ENCODE measurements at regions of chr6 and their contacts with region 1.

Region 1: GRCh38 chr6:6766230-6766905 is 177.8 kb downstream of the LY86 start:
- DNase-seq: peak; percentile 50 to 75
- ATAC-seq: peak; percentile 94 to 97
- H3K4me3 ChIP-seq: peak overlapping the region in 1 of 4 donors; percentile 12
- H3K27ac ChIP-seq: peak overlapping the region; percentile 65 to 85 (median 73)
- H3K4me1 ChIP-seq: peaks cover 16 to 22% of the 10 kb centered on the region in 2 donors
- H3K27me3 ChIP-seq: no peaks in the 10 kb centered on the region
- CTCF ChIP-seq: no peak
- POLR2A ChIP-seq: no peak

Region 2: GRCh38 chr6:6712258-6712999 is 53.9 kb before region 1 on chr6:
- in situ Hi-C with region 1: no loop called
- intact Hi-C with region 1: no loop called
- DNase-seq: no peak
- ATAC-seq: peak; percentile 32 to 57
- H3K4me3 ChIP-seq: no peak overlapping the region
- H3K27ac ChIP-seq: peak overlapping the region in 2 of 4 donors; percentile 24 to 34
- H3K4me1 ChIP-seq: peaks cover 4 to 9% of the 10 kb centered on the region in 2 donors
- H3K27me3 ChIP-seq: no peaks in the 10 kb centered on the region
- CTCF ChIP-seq: no peak
- POLR2A ChIP-seq: no peak

Region 3: GRCh38 chr6:6811151-6812002 is 45.0 kb after region 1 on chr6:
- in situ Hi-C with region 1: no loop called
- intact Hi-C with region 1: loop called (anchors 5 kb)
- DNase-seq: no peak
- ATAC-seq: peak; percentile 47 to 64
- H3K4me3 ChIP-seq: peak overlapping the region; percentile 27 to 42 (median 38)
- H3K27ac ChIP-seq: peak overlapping the region in 3 of 4 donors; percentile 6 to 48 (median 39)
- H3K4me1 ChIP-seq: peaks cover 0 to 7% of the 10 kb centered on the region in 2 donors
- H3K27me3 ChIP-seq: no peaks in the 10 kb centered on the region
- CTCF ChIP-seq: no peak
- POLR2A ChIP-seq: no peak

Region 4: DNA sequence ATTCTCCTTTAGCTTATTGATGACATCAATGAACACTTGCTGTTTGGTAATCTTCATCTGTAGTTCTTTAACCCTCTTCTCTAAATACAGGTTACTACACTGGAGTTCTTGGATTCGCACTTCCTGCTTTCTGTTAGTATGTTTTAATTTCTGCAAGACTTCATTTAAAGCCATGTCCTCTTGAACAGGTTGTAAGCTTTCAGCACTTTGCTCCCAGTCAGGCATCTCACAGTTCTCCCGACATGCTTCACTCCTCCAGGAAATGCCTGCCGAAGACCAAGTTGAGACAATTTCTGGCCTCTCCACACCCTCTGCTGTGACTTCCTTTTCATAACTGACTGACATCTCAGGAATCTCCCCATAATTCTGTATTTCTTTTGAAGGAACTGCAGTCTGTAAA is 607.4 kb after region 1 on chr6:
- in situ Hi-C with region 1: no loop called
- intact Hi-C with region 1: no loop called
- DNase-seq: no peak
- ATAC-seq: no peak
- H3K4me3 ChIP-seq: no peak overlapping the region
- H3K27ac ChIP-seq: no peak overlapping the region
- H3K4me1 ChIP-seq: no peaks in the 10 kb centered on the region
- H3K27me3 ChIP-seq: no peaks in the 10 kb centered on the region
- CTCF ChIP-seq: no peak
- POLR2A ChIP-seq: no peak